SK-N-SH (cell line): ENCODE measurements at regions of chr9 and their contacts with region 1.

Region 1: GRCh38 chr9:124771021-124771866 is at the start of gene NR6A1:
- DNase-seq: peak; percentile 98
- H3K4me3 ChIP-seq: peak within 1 kb of the TSS; percentile 75 to 92
- H3K27ac ChIP-seq: peak within 1 kb of the TSS; percentile 71 to 82
- H3K4me1 ChIP-seq: peaks cover 8 to 16% of the 10 kb centered on the region in 2 experiments; a peak in 3 of 4 replicates
- H3K27me3 ChIP-seq: no peaks in the 10 kb centered on the region
- CTCF ChIP-seq: peak; percentile 47
- EP300 ChIP-seq: peak in 1 of 2 experiments; percentile 73; a peak in 1 of 4 replicates
- RAD21 ChIP-seq: no peak
- polyA plus RNA-seq, gene NR6A1: 1.2 and 1.4 TPM in 2 replicates

Region 2: DNA sequence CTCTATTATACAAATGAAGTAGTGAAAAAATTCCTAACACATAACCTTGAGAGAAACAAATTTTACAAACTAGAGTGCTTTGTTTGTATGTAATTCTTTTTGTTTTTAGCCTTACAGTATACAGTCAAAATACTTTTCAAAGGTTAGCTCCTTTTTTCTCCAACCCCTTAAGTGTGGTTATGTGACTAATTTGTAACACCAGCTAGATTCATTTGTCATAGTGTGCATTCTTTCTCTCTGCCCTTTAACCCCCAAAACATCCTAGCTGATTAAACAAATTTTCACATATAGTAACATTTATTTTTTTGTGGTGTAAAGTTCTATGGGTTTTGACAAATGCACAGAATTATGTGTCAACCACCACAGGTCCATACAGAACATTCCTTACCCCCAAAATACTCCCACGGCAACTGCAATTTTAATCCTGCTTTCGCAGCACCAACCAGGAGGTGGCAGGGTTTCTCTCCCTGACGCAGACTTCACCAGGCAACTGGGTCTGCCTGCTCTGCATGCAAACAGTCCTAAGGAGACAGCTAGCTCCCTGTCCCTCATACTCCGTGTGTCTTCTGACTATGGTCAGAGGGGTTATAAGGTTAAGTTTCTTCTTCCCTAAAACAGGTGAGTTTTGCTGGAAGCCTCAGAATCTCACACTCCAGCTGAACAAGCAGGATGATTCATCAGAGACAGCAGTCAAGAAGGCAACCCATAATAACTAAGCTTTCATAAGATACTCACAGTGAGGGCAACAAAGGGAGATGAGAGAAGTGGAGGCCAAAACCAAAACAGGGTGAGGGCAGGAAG is 219.6 kb before region 1 on chr9:
- CTCF ChIA-PET with region 1: interaction called, 25 read pairs
- POLR2A ChIA-PET with region 1: no interaction called
- DNase-seq: peak; percentile 66
- H3K4me3 ChIP-seq: peak overlapping the region in 1 of 2 experiments; percentile 13; a peak in 1 of 4 replicates
- H3K27ac ChIP-seq: peak overlapping the region in 1 of 2 experiments; percentile 33; a peak in 2 of 4 replicates
- H3K4me1 ChIP-seq: peaks cover 3 to 5% of the 10 kb centered on the region in 2 experiments; a peak in 2 of 4 replicates
- H3K27me3 ChIP-seq: no peaks in the 10 kb centered on the region
- CTCF ChIP-seq: peak; percentile 88
- EP300 ChIP-seq: no peak
- RAD21 ChIP-seq: peak; percentile 87

Region 3: DNA sequence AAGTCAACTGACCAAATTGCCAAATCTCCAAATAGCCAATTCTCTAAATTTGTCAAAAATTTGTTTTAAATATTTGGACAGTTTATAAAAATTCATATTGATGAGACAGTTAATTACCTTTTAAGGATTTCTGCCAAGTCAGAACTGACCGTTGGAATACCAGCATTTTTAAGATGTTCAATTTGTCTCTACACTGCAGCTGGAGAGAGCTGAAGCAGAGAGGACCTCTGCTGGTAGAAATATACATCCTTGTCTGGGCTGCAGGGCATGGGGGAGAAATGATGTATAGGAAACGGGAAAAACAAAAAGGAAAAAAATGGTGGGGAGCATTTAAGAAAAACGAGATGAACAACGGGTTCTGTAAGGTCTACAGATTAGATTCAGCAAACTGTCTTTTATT is 17.0 kb before region 1 on chr9:
- CTCF ChIA-PET with region 1: interaction called, 78 read pairs
- POLR2A ChIA-PET with region 1: no interaction called
- DNase-seq: peak; percentile 31
- H3K4me3 ChIP-seq: no peak overlapping the region
- H3K27ac ChIP-seq: peak overlapping the region in 1 of 2 experiments; percentile 78; a peak in 2 of 4 replicates
- H3K4me1 ChIP-seq: peaks cover 7 to 56% of the 10 kb centered on the region in 2 experiments
- H3K27me3 ChIP-seq: no peaks in the 10 kb centered on the region
- CTCF ChIP-seq: peak; percentile 74
- EP300 ChIP-seq: no peak
- RAD21 ChIP-seq: peak; percentile 72

Region 4: DNA sequence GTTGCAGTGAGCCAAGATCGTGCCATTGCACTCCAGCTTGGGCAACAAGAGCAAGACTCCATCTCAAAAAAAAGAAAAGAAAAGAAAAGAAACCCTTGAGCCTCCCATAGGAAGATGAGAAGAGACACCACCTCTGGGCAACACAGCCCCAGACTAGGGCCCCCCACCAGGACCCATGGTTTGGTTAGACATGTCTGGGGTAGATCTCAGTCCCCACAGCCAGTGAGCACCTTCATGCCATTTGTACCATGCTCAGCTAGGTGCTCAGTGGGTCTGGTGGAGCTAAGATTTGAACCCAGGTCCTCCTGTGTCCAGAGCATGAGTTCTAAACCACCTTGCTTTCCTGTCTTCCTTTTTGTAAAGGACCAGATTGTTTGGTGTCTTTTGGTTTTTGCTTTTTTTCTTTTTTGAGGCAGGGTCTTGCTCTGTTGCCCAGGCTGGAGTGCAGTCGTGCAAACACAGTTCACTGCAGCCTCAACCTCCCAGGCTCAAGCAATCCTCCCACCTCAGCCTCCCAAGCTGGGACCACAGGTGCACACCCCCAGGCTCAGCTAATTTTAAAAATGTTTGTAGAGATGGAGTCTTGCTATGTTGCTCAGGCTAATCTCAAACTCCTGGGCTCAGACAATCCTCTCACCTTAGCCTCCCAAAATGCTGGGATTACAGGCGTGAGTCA is 17.4 kb after region 1 on chr9:
- CTCF ChIA-PET with region 1: interaction called, 81 read pairs
- POLR2A ChIA-PET with region 1: no interaction called
- DNase-seq: no peak
- H3K4me3 ChIP-seq: no peak overlapping the region
- H3K27ac ChIP-seq: no peak overlapping the region
- H3K4me1 ChIP-seq: no peaks in the 10 kb centered on the region
- H3K27me3 ChIP-seq: no peaks in the 10 kb centered on the region
- CTCF ChIP-seq: no peak
- EP300 ChIP-seq: no peak
- RAD21 ChIP-seq: no peak

Region 5: DNA sequence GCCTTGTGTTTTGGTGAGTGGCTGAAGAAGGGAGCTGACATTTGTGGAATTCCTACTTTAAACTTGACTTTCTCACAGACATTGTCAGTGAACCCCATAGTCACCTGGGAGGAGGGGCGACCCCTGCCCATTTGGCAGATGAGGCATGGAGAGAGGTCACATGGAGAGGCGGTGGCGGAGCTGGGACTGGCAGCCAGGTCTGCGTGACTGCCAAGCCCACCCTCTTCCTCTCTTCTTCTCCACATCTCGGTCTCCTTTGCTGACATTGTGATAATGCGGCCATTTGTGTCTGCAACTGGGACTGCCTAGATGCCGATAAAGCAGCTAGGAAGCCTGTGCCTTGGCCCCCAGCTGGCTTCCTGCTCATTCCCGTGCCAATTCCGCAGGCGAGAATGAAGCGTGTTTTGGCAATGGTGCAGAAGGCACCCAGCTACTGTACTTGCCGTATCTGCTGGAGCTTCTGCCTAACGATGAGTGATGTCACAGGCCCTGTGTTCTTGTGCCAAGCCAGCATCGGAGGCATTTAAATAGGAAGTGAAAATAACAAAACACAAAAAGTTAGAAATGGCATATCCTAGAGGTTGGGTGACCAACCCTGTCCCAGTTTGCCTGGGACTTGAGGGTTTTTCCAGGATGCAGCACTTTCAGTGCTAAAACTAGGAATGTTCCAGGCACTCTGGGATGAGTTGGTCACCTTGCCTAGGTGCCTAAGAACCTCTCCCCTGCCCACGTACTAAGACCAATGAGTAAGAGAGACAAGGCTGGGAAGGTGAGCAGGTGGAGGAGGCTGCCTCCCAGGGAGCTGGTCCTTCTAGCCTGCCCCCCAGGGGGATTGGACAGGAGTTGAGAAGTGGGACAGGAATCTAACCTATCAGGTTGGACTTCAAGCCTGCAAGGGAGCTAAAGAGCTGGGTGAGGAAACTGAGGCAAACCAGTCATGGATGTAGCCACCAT is 29.3 kb after region 1 on chr9:
- CTCF ChIA-PET with region 1: interaction called, 81 read pairs
- POLR2A ChIA-PET with region 1: no interaction called
- DNase-seq: no peak
- H3K4me3 ChIP-seq: no peak overlapping the region
- H3K27ac ChIP-seq: no peak overlapping the region
- H3K4me1 ChIP-seq: peaks cover 4 to 15% of the 10 kb centered on the region in 2 experiments; a peak in 3 of 4 replicates
- H3K27me3 ChIP-seq: no peaks in the 10 kb centered on the region
- CTCF ChIP-seq: no peak
- EP300 ChIP-seq: no peak
- RAD21 ChIP-seq: no peak

Region 6: DNA sequence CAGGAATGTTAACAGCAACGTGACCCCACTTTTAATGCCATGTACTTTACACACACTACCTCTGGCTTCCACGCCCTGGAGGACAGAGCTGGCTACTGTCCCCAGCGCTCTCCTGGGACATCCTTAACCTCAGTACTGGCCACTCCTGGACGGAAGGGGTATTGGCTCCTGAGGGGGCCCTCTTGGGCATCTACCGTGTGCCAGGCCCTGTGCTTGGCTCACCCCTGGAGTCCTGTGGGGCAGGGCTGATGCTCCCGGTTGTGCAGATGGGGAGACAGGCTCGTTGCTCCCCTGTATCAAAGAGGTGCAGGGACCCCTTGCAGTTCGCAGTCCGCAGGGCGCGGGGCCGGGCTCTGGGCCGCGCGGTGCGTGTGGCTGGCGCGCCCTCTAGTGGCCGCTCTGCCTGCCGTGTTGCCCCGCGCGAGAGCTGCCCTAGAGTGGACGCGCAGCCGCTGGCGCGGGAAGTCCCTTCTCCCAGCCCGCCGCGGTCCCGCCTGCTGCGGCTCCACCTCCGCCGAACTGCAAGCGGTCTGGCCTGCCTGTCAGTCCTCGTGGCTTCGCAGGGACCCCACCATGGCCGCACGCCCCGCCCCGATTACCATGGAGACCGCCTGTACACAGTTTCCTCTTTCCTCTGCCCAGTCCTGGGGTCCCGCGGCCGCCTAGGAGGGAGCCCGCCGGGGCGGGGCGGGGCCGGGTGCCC is 81.7 kb after region 1 on chr9 and contains the start of gene WDR38:
- CTCF ChIA-PET with region 1: interaction called, 1,436 read pairs
- POLR2A ChIA-PET with region 1: interaction called, 42 read pairs
- DNase-seq: peak; percentile 96
- H3K4me3 ChIP-seq: peak within 1 kb of the TSS; percentile 45 to 62
- H3K27ac ChIP-seq: no peak within 1 kb of the TSS
- H3K4me1 ChIP-seq: peaks cover 0 to 4% of the 10 kb centered on the region in 2 experiments; a peak in 1 of 4 replicates
- H3K27me3 ChIP-seq: no peaks in the 10 kb centered on the region
- CTCF ChIP-seq: peak; percentile 99
- EP300 ChIP-seq: no peak
- RAD21 ChIP-seq: peak; percentile 78
- polyA plus RNA-seq, gene WDR38: not detected in 2 replicates

Region 7: DNA sequence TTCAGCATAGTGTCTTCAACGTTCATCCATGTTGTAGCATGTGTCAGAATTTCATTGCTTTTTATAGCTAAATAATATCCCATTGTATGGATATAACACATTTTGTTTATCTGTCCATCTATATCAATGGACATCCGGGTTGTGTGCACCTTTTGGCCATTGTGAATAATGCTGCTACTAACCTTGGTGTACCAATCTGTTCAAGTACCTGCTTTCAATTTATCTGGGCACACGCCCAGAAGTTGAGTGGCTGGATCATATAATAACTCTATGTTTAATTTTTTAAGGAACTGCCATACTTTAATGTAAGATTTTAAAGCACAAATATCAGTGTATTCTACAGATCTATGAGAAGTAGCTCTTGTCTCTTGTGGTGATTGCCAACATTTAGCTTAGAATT is 328.6 kb after region 1 on chr9:
- CTCF ChIA-PET with region 1: no interaction called
- POLR2A ChIA-PET with region 1: no interaction called
- DNase-seq: no peak
- H3K4me3 ChIP-seq: no peak overlapping the region
- H3K27ac ChIP-seq: no peak overlapping the region; a peak in 1 of 4 replicates
- H3K4me1 ChIP-seq: peaks cover 0 to 3% of the 10 kb centered on the region in 2 experiments; a peak in 1 of 4 replicates
- H3K27me3 ChIP-seq: no peaks in the 10 kb centered on the region
- CTCF ChIP-seq: no peak
- EP300 ChIP-seq: no peak
- RAD21 ChIP-seq: no peak

Region 8: GRCh38 chr9:125374443-125375309 is 603.4 kb after region 1 on chr9:
- CTCF ChIA-PET with region 1: interaction called, 12 read pairs
- POLR2A ChIA-PET with region 1: no interaction called
- DNase-seq: peak; percentile 89
- H3K4me3 ChIP-seq: peak overlapping the region; percentile 36 to 58
- H3K27ac ChIP-seq: no peak overlapping the region
- H3K4me1 ChIP-seq: peaks cover 0 to 31% of the 10 kb centered on the region in 2 experiments; a peak in 1 of 4 replicates
- H3K27me3 ChIP-seq: no peaks in the 10 kb centered on the region
- CTCF ChIP-seq: peak; percentile 76
- EP300 ChIP-seq: no peak
- RAD21 ChIP-seq: peak; percentile 96